PC-3 (cell line): ENCODE measurements at regions of chr6 and their contacts with region 1.

Region 1: GRCh38 chr6:137218917-137219663 is at the start of gene IFNGR1:
- DNase-seq: peak; percentile 87
- ATAC-seq: peak; percentile 94
- H3K4me3 ChIP-seq: peak within 1 kb of the TSS; percentile 99
- H3K27ac ChIP-seq: peak within 1 kb of the TSS; percentile 91
- H3K4me1 ChIP-seq: peaks cover 38% of the 10 kb centered on the region
- H3K27me3 ChIP-seq: no peaks in the 10 kb centered on the region
- CTCF ChIP-seq: no peak
- total RNA-seq, gene IFNGR1: 15.8 and 24.6 TPM in 2 replicates

Region 2: GRCh38 chr6:137261393-137262160 is 42.5 kb after region 1 on chr6:
- CTCF ChIA-PET with region 1: no interaction called
- POLR2A ChIA-PET with region 1: no interaction called
- intact Hi-C with region 1: loop called (anchors 5 kb)
- DNase-seq: peak; percentile 87
- ATAC-seq: peak; percentile 83
- H3K4me3 ChIP-seq: peak overlapping the region; percentile 37; the same call in 1 of the 2 replicates
- H3K27ac ChIP-seq: peak overlapping the region; percentile 88
- H3K4me1 ChIP-seq: peaks cover 20% of the 10 kb centered on the region
- H3K27me3 ChIP-seq: no peaks in the 10 kb centered on the region
- CTCF ChIP-seq: no peak